Heart left ventricle (tissue), 16 donors: ENCODE measurements at regions of chr20 and their contacts with region 1.

Region 1: DNA sequence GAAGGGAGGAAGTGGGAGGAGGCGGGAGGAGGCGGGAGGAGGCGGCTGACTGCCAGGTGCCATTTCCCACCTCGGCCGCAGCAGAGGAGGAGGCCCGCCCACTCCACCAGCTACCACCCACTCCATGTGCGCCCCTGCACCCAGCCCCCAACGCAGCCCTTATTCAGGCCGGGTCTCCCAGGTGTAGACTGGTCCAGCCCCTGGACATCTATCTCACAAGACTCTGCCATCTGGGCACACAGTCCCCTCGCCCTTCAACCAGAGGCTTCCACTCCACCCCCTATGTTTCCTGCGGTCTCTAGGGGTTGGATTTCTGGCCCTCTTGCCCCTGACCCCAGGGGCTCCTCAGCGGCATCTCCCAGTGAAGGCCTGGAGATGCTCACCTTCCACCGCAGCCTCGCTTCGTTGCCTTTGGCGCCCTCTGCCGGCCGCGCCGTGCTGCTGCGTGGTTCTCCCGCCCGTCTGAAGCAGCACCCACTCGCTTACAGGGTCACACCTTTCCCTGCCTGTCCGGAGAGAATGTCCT is 32.6 kb upstream of the FAM83D start:
- DNase-seq: peak; percentile 45 to 83 (median 60)
- ATAC-seq: peak; percentile 28 to 89 (median 85)
- H3K4me3 ChIP-seq: peak overlapping the region in 1 of 12 donors; percentile 1
- H3K27ac ChIP-seq: peak overlapping the region in 1 of 12 donors; percentile 23
- H3K4me1 ChIP-seq: peaks cover 0 to 16% (median 7%) of the 10 kb centered on the region in 12 donors
- H3K27me3 ChIP-seq: peaks cover 0 to 7% (median 0%) of the 10 kb centered on the region in 9 donors
- CTCF ChIP-seq: peak; percentile 87 to 96 (median 92)
- POLR2A ChIP-seq: no peak

Region 2: GRCh38 chr20:38514185-38514584 is 379.4 kb before region 1 on chr20:
- intact Hi-C with region 1: no loop called
- DNase-seq: no peak
- ATAC-seq: no peak
- H3K4me3 ChIP-seq: no peak overlapping the region
- H3K27ac ChIP-seq: no peak overlapping the region
- H3K4me1 ChIP-seq: peaks cover 0 to 3% (median 0%) of the 10 kb centered on the region in 12 donors
- H3K27me3 ChIP-seq: no peaks in the 10 kb centered on the region
- CTCF ChIP-seq: no peak
- POLR2A ChIP-seq: no peak

Region 3: DNA sequence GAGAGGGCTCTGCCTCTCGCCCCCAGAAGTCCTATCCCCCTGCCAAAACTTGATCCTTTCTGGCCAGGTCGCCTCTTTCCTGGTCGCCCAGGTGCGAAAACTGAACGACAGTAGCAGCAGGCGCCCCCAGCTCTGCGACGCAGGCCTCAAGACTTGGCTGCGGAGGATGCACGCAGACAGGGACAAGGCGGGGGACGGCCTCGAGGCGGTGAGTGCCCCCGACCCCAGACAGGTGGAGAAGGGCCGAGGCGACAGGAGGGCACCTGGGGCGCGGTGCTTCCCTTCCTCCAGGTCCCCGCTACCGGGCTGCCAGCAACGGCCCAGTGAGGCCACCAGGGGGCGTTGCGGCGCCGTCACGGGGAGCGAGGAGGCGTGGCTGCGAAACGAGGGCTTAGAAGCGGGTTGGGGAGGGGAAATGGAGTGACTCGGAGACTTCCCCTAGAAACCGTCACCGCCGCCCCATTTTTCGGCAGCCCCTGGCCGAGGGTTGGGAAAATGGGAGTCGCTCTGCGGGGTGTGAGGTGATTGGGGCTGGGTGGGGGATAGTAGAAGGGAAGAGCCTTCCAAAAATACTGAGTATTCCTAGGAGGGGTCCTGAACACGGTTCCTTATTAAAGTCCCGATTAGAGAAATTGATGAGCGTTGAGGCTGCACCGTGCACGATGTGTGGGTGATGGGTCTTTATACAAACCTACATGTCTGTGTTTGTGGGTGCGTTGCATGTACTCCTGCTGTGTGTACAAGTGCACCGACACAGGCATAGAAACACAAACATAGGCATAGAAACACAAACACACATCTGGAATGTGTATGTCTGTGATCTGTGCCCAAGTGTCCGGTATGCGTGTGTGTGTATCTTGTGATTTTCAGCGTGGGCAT is 247.4 kb before region 1 on chr20:
- intact Hi-C with region 1: loop called (anchors 2 to 10 kb)
- DNase-seq: peak; percentile 67 to 89 (median 71)
- ATAC-seq: peak in 3 of 4 donors; percentile 77 to 91 (median 86)
- H3K4me3 ChIP-seq: peak overlapping the region in 5 of 12 donors; percentile 5 to 28 (median 20)
- H3K27ac ChIP-seq: no peak overlapping the region
- H3K4me1 ChIP-seq: peaks cover 0 to 10% (median 3%) of the 10 kb centered on the region in 12 donors
- H3K27me3 ChIP-seq: peaks cover 8 to 75% (median 39%) of the 10 kb centered on the region in 9 donors
- CTCF ChIP-seq: peak; percentile 89 to 97 (median 93)
- POLR2A ChIP-seq: no peak

Region 4: GRCh38 chr20:38730989-38731737 is 162.5 kb before region 1 on chr20:
- intact Hi-C with region 1: loop called in 1 of 10 experiments (anchors 5 kb)
- DNase-seq: peak; percentile 44 to 85 (median 63)
- ATAC-seq: peak; percentile 66 to 89 (median 79)
- H3K4me3 ChIP-seq: peak overlapping the region in 8 of 12 donors; percentile 19 to 46 (median 32)
- H3K27ac ChIP-seq: no peak overlapping the region
- H3K4me1 ChIP-seq: peaks cover 0 to 49% (median 16%) of the 10 kb centered on the region in 12 donors
- H3K27me3 ChIP-seq: peaks cover 66 to 100% (median 86%) of the 10 kb centered on the region in 9 donors
- CTCF ChIP-seq: peak; percentile 89 to 99 (median 96)
- POLR2A ChIP-seq: no peak

Region 5: GRCh38 chr20:38757145-38757775 is 136.4 kb before region 1 on chr20:
- intact Hi-C with region 1: loop called in 1 of 10 experiments (anchors 5 kb)
- DNase-seq: no peak
- ATAC-seq: peak in 3 of 4 donors; percentile 22 to 85 (median 63)
- H3K4me3 ChIP-seq: no peak overlapping the region
- H3K27ac ChIP-seq: peak overlapping the region in 6 of 12 donors; percentile 11 to 43 (median 22)
- H3K4me1 ChIP-seq: peaks cover 0 to 6% (median 0%) of the 10 kb centered on the region in 12 donors
- H3K27me3 ChIP-seq: no peaks in the 10 kb centered on the region
- CTCF ChIP-seq: no peak
- POLR2A ChIP-seq: no peak

Region 6: GRCh38 chr20:38790200-38791053 is 103.2 kb before region 1 on chr20:
- intact Hi-C with region 1: loop called in 1 of 10 experiments (anchors 10 kb)
- DNase-seq: no peak
- ATAC-seq: no peak
- H3K4me3 ChIP-seq: no peak overlapping the region
- H3K27ac ChIP-seq: no peak overlapping the region
- H3K4me1 ChIP-seq: no peaks in the 10 kb centered on the region
- H3K27me3 ChIP-seq: no peaks in the 10 kb centered on the region
- CTCF ChIP-seq: peak in 11 of 12 donors; percentile 34 to 78 (median 62)
- POLR2A ChIP-seq: no peak

Region 7: GRCh38 chr20:38805502-38805957 is 88.1 kb before region 1 on chr20 and contains the start of gene PPP1R16B:
- intact Hi-C with region 1: loop called in 7 of 10 experiments (anchors 5 to 10 kb)
- DNase-seq: peak; percentile 62 to 85 (median 70)
- ATAC-seq: peak; percentile 78 to 91 (median 86)
- H3K4me3 ChIP-seq: peak within 1 kb of the TSS; percentile 68 to 98 (median 76)
- H3K27ac ChIP-seq: peak within 1 kb of the TSS; percentile 69 to 90 (median 86)
- H3K4me1 ChIP-seq: peaks cover 0 to 55% (median 31%) of the 10 kb centered on the region in 12 donors
- H3K27me3 ChIP-seq: peaks cover 3 to 33% (median 17%) of the 10 kb centered on the region in 9 donors
- CTCF ChIP-seq: no peak
- POLR2A ChIP-seq: peak in 1 of 2 donors; percentile 59
- total RNA-seq, gene PPP1R16B: 3.4 to 11.8 (median 6.9) TPM

Region 8: GRCh38 chr20:38812182-38812581 is 81.4 kb before region 1 on chr20:
- intact Hi-C with region 1: loop called in 7 of 10 experiments (anchors 5 to 10 kb)
- DNase-seq: no peak
- ATAC-seq: peak; percentile 46 to 79 (median 52)
- H3K4me3 ChIP-seq: no peak overlapping the region
- H3K27ac ChIP-seq: peak overlapping the region in 8 of 12 donors; percentile 12 to 62 (median 48)
- H3K4me1 ChIP-seq: peaks cover 0 to 62% (median 33%) of the 10 kb centered on the region in 12 donors
- H3K27me3 ChIP-seq: peaks cover 0 to 17% (median 3%) of the 10 kb centered on the region in 9 donors
- CTCF ChIP-seq: no peak
- POLR2A ChIP-seq: no peak